Activated T-helper 1 cell treated with anti-CD3 and anti-CD28 coated beads, Interleukin-12 subunit alpha, Interleukin-12 subunit beta, Interleukin-2, Interleukin-4 antibody, amounts not matched to agents 30 ng/mL and 10 ng/mL and 1 ng/mL, durations not matched to agents 14 hours and 24 hours and 36 hours (primary cell): ENCODE measurements at regions of chr10 and their contacts with region 1.

Region 1: GRCh38 chr10:62492012-62492869 is 118.1 kb downstream of the ZNF365 start:
- DNase-seq: no peak
- H3K4me3 Mint-ChIP-seq: no peak overlapping the region
- H3K27ac Mint-ChIP-seq: no peak overlapping the region
- H3K4me1 Mint-ChIP-seq: no peaks in the 10 kb centered on the region
- H3K27me3 Mint-ChIP-seq: peaks cover 18% of the 10 kb centered on the region

Region 2: GRCh38 chr10:62554632-62555199 is 62.5 kb after region 1 on chr10:
- intact Hi-C with region 1: loop called (anchors 2 kb)
- DNase-seq: no peak
- H3K4me3 Mint-ChIP-seq: no peak overlapping the region
- H3K27ac Mint-ChIP-seq: no peak overlapping the region
- H3K4me1 Mint-ChIP-seq: no peaks in the 10 kb centered on the region
- H3K27me3 Mint-ChIP-seq: peaks cover 24% of the 10 kb centered on the region

Region 3: GRCh38 chr10:63083904-63084689 is 591.9 kb after region 1 on chr10:
- intact Hi-C with region 1: loop called (anchors 1 kb)
- DNase-seq: peak; percentile 14
- H3K4me3 Mint-ChIP-seq: no peak overlapping the region
- H3K27ac Mint-ChIP-seq: no peak overlapping the region
- H3K4me1 Mint-ChIP-seq: peaks cover 12% of the 10 kb centered on the region
- H3K27me3 Mint-ChIP-seq: peaks cover 28% of the 10 kb centered on the region